ENCODE measurements at regions of chr19 and their contacts with region 1.

Region 1: GRCh38 chr19:33302175-33302973 is at the start of gene CEBPA:
- DNase-seq: peak; percentile 46 to 82 (median 75)
- H3K4me3 ChIP-seq: peak within 1 kb of the TSS; percentile 56
- H3K27ac ChIP-seq: peak within 1 kb of the TSS in 1 of 2 donors; percentile 63
- H3K4me1 ChIP-seq: peaks cover 10% of the 10 kb centered on the region
- H3K27me3 ChIP-seq: no peaks in the 10 kb centered on the region
- CTCF ChIP-seq: peak in 2 of 3 donors; percentile 50 to 90
- EP300 ChIP-seq: no peak
- POLR2A ChIP-seq: peak; percentile 89
- total RNA-seq, gene CEBPA: 1.5 to 6.1 (median 3.7) TPM

Region 2: DNA sequence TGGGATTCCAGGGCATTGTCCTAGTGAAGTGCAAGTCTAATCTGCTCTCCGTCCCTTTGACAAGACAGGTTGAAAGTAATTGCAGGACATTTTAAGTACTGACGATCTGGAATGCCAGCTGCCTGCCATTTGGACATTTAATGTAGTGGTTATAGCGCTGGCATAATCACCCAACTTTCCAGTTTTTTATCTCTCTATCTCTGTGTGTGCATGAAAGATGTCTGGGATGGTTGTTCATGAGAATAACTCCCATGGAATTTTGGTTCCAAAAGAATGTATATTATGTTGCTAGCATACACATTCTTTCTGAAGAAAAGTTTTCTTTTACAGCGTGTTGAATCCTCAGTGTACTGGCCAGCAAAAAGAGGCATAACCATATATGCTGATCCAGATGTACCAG is 529.2 kb before region 1 on chr19:
- intact Hi-C with region 1: no loop called
- DNase-seq: no peak
- H3K4me3 ChIP-seq: no peak overlapping the region
- H3K27ac ChIP-seq: no peak overlapping the region
- H3K4me1 ChIP-seq: no peaks in the 10 kb centered on the region
- H3K27me3 ChIP-seq: no peaks in the 10 kb centered on the region
- CTCF ChIP-seq: no peak
- EP300 ChIP-seq: no peak
- POLR2A ChIP-seq: no peak

Region 3: GRCh38 chr19:33124207-33125098 is 177.9 kb before region 1 on chr19:
- intact Hi-C with region 1: no loop called
- DNase-seq: no peak
- H3K4me3 ChIP-seq: no peak overlapping the region
- H3K27ac ChIP-seq: no peak overlapping the region
- H3K4me1 ChIP-seq: no peaks in the 10 kb centered on the region
- H3K27me3 ChIP-seq: no peaks in the 10 kb centered on the region
- CTCF ChIP-seq: no peak
- EP300 ChIP-seq: no peak
- POLR2A ChIP-seq: no peak

Region 4: DNA sequence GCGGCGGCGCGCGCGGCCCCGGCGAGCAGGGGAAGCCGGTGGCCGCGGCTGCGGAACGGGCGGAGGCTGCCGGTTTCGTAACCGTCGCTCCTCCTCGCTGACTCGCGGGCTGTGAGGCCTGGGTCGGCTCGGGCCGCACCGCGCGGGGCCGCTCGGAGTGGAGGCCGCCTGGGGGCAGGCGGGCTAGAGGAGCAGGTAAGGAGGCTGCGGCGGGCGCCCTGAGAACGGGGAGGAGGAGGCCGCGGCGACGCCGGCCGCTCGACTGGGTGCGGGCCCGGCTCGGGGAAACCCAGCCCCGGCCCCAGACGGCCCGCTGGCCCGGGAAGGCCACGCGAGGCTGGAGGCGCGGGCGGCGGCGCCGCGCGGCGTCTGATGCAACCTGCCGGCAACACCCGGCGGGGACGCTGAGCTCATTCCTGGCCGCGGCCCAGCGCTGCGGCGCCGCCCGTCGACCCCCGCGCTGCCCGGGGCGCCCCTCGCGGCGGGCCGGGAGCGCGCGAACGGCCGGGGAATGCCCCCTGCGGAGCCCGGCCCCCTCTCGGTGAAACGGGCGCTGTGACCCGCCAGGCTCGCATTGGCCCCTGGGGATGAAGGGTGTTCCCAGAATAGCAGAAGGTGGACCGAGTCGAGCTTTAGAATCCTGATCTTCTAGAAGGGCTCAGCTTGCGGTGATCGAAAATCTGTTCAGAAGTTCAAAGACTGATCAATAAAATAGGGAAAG is 71.5 kb after region 1 on chr19 and contains the start of gene CEBPG:
- intact Hi-C with region 1: loop called in 1 of 4 experiments (anchors 1 kb)
- DNase-seq: peak; percentile 48 to 76 (median 67)
- H3K4me3 ChIP-seq: peak within 1 kb of the TSS; percentile 79
- H3K27ac ChIP-seq: peak within 1 kb of the TSS; percentile 92 to 95
- H3K4me1 ChIP-seq: peaks cover 4% of the 10 kb centered on the region
- H3K27me3 ChIP-seq: no peaks in the 10 kb centered on the region
- CTCF ChIP-seq: peak in 1 of 3 donors; percentile 17
- EP300 ChIP-seq: no peak
- POLR2A ChIP-seq: peak; percentile 87
- total RNA-seq, gene CEBPG: 7.3 to 54.6 (median 12.0) TPM

Measured in ovary (tissue), 10 donors.